ENCODE measurements at regions of chr22 and their contacts with region 1.

Region 1: DNA sequence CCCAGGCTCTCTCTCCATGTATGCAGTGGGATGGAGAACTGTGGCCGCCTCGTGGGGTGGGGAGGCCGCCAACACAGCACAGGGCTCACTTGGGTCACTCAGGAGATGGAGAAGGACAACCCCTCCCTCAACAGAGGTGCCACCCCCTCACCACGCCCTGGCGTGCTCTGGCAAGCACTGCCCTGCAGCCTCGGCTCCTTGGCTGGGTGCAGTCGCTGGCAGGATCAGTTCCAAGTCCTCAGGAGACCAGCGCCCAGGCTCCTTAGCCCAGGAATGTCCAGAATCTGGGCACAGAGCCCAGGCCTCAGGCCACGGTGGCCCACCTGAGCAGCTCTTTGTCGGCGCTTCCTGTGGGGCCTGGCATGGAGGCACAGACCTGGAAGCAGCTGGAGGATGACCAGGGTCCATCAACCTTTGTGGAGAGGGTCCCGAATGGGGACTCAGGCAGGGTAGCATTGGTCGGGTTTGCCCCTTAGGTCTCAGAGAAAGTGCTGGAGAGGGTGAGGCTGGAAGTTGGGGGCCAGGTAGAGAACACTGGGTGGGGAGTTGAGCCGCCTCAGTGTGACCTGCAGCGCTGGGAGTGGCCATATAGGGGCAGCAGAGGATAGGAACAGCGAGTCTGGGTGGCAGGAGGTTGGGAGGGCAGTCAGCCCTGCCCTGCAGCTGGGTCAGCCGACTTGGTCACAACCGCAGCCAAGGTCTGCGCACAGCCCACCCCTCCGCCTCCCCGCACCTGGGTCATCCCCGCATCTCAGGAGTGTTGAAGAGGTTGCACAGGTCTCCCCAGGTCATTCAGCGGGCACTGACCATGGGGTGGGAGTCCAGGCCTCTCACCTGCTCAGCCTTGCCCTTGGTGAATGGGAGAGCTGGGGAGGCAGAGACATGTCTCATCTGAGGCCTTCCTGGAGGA is 8.2 kb downstream of the SUSD2 start:
- DNase-seq: peak; percentile 61
- H3K4me3 ChIP-seq: no peak overlapping the region
- H3K27ac ChIP-seq: no peak overlapping the region
- H3K4me1 ChIP-seq: peaks cover 9% of the 10 kb centered on the region
- H3K27me3 ChIP-seq: no peaks in the 10 kb centered on the region
- CTCF ChIP-seq: peak; percentile 90 to 94
- POLR2A ChIP-seq: no peak

Region 2: GRCh38 chr22:24106385-24107381 is 82.8 kb before region 1 on chr22:
- CTCF ChIA-PET with region 1: no interaction called
- POLR2A ChIA-PET with region 1: no interaction called
- dilution Hi-C with region 1: no loop called
- intact Hi-C with region 1: no loop called
- DNase-seq: peak; percentile 5
- H3K4me3 ChIP-seq: no peak overlapping the region
- H3K27ac ChIP-seq: no peak overlapping the region
- H3K4me1 ChIP-seq: no peaks in the 10 kb centered on the region
- H3K27me3 ChIP-seq: no peaks in the 10 kb centered on the region
- CTCF ChIP-seq: no peak
- POLR2A ChIP-seq: no peak

Region 3: GRCh38 chr22:24200616-24201212 is 11.2 kb after region 1 on chr22:
- CTCF ChIA-PET with region 1: interaction called, 33 read pairs
- POLR2A ChIA-PET with region 1: no interaction called
- dilution Hi-C with region 1: no loop called
- intact Hi-C with region 1: no loop called
- DNase-seq: peak; percentile 74
- H3K4me3 ChIP-seq: no peak overlapping the region
- H3K27ac ChIP-seq: peak overlapping the region; percentile 22
- H3K4me1 ChIP-seq: peaks cover 24% of the 10 kb centered on the region
- H3K27me3 ChIP-seq: no peaks in the 10 kb centered on the region
- CTCF ChIP-seq: no peak
- POLR2A ChIP-seq: no peak

Region 4: DNA sequence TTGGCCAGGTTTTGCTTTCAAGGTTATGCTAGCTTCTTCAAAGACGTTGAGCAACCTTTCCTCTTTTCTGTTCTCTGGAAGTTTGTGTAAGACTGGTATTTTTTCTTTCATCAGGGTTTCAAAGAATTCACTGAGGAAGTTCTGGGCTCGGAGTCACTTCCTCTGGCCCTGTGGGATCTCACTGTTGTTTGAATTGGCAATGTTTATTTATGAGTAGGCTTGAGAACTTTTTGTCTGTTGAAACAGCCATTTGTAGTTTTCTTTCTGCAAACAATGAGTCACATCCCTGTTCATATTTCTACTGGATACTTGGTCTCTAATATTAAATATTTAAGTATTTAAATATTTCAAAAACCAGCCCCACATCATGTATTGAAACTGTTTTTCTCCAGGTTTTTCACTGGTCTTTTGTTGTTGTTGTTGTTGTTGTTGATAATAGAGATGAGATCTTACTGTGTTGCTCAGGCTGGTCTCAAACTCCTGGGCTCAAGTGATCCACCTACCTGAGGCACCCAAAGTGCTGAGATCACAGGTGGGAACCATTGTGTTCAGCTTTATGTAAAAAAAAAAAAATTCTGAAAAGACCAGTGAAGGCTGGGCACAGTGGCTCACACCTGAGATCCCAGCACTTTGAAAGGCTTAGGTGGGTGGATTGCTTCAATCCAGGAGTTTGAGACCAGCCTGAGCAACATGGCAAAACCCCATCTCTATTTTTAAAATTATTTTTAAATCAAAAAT is 18.7 kb after region 1 on chr22:
- CTCF ChIA-PET with region 1: interaction called, 33 read pairs
- POLR2A ChIA-PET with region 1: no interaction called
- dilution Hi-C with region 1: no loop called
- intact Hi-C with region 1: loop called (anchors 1 kb)
- DNase-seq: peak; percentile 98
- H3K4me3 ChIP-seq: peak overlapping the region in 1 of 3 experiments; percentile 46
- H3K27ac ChIP-seq: peak overlapping the region; percentile 99
- H3K4me1 ChIP-seq: peaks cover 43% of the 10 kb centered on the region
- H3K27me3 ChIP-seq: no peaks in the 10 kb centered on the region
- CTCF ChIP-seq: no peak
- POLR2A ChIP-seq: peak; percentile 61

Region 5: DNA sequence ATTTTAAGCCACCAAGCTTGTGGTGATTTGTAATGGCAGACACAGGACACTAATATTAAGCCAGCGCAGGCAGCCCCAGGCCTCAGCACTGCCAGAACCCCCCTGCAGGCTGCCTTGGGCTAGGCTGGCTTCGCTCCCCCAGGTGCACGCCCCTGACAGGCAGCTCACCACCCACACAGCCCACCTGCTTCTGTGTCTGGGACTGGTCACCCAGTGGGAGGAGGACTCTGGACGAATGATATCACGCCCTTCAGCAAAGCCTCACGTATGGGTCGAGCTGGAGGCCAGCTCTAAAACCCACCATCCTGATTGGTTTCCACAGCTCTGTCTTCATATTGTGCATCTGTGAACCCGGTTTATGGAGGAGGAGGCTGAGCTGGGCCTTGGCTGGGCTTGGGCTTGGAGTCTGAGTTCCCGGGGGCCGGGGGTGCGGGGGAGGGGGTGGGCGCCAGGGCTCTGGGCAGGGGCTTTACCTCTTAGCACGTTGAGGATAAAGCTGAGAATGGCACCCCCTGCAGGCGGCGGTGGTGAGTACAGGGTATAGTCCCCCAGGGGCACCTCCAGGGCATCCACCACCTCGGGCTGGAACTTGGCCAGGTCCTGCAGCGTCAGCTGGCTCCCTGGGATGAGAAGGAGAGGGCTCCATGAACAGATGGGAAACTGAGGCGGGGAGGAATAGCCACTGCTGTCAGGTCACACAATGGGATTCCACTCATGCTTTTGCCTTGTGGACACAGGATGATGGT is 41.6 kb after region 1 on chr22:
- CTCF ChIA-PET with region 1: interaction called, 71 read pairs
- POLR2A ChIA-PET with region 1: no interaction called
- dilution Hi-C with region 1: no loop called
- intact Hi-C with region 1: no loop called
- DNase-seq: peak; percentile 18
- H3K4me3 ChIP-seq: no peak overlapping the region
- H3K27ac ChIP-seq: no peak overlapping the region
- H3K4me1 ChIP-seq: no peaks in the 10 kb centered on the region
- H3K27me3 ChIP-seq: no peaks in the 10 kb centered on the region
- CTCF ChIP-seq: peak; percentile 21 to 38
- POLR2A ChIP-seq: no peak

Region 6: DNA sequence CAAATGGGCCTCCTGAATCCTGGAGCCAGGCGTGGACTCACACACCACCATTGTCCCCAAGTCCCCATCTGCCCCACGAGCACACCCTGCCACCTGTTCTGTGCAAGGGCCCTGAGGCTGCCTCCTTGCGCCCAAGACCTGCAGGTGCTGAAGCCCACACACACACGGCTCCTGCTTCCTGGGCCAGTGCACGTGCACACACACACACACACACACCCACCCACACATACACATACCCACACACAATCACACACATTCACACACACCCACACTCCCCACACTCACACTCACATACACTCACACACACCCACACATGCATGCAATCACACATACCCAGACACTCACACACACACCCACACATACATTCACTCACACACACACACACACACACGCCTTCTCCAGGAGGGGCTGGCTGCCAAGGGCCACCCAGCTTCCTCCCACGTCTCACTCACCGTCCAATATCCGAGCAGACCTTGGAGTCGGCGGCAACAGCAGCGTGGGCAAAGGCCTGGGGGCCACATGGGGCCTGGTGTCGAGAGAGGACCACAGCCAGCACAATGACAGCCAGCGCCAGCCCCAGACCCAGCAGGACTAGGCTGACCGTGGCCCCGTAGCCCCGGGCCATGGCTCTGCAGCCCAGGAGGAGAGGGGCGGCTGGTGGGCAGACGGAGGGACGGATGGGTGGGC is 54.7 kb after region 1 on chr22:
- CTCF ChIA-PET with region 1: interaction called, 164 read pairs
- POLR2A ChIA-PET with region 1: interaction called, 4 read pairs
- dilution Hi-C with region 1: no loop called
- intact Hi-C with region 1: loop called (anchors 1 kb)
- DNase-seq: peak; percentile 56
- H3K4me3 ChIP-seq: peak overlapping the region in 2 of 3 experiments; percentile 32 to 53
- H3K27ac ChIP-seq: peak overlapping the region; percentile 53
- H3K4me1 ChIP-seq: peaks cover 56% of the 10 kb centered on the region
- H3K27me3 ChIP-seq: no peaks in the 10 kb centered on the region
- CTCF ChIP-seq: no peak
- POLR2A ChIP-seq: no peak

Region 7: DNA sequence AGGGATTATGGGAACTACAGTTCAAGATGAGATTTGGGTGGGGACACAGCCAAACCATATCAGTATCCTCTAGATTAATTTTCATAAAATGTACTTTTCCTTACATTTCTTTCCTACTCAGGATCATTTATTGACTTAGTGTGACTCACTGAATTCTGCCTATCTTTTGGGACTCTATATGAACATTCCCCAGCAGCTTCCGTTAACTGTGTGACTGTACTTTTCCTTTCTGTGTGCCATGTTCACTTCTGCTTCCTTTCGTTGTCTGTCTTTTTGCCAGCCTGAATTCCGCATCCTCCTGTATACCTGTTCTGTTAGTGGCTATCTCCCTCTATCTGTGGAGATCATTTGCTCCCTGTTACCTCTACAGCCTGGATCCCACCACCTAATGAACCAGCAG is 129.9 kb after region 1 on chr22:
- CTCF ChIA-PET with region 1: no interaction called
- POLR2A ChIA-PET with region 1: no interaction called
- dilution Hi-C with region 1: no loop called
- intact Hi-C with region 1: loop called (anchors 1 kb)
- DNase-seq: peak; percentile 89
- H3K4me3 ChIP-seq: peak overlapping the region in 1 of 3 experiments; percentile 39
- H3K27ac ChIP-seq: peak overlapping the region; percentile 88
- H3K4me1 ChIP-seq: peaks cover 44% of the 10 kb centered on the region
- H3K27me3 ChIP-seq: no peaks in the 10 kb centered on the region
- CTCF ChIP-seq: no peak
- POLR2A ChIP-seq: peak; percentile 26

Region 8: DNA sequence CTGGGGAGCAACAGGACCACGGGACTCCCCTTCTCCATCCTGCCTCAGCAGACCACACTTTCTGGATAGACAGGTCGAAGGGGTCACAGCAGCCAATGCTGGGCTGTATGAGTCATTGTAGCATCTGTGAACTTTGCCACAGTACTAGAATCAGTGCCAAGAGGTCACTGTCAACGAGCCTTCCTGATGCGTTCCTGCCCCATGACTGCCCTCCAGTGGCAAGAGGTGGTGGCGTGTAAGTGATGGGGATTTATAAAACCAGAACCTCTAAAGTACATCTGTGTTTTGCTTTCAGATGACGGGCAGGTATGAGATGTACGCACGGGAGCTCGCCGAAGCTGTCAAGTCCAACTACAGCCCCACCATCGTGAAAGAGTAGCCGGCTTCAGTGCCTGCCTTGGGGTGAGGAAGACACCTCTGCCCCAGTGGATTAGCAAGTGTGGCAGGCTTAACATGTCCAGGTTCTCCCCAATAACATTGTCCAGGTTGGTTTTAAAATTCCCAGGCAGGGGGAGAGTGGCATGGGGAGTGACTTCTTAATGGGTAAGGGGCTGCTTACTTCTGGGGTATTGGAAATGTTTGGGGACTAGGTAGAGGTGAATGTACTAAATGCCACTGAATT is 336.0 kb after region 1 on chr22:
- CTCF ChIA-PET with region 1: no interaction called
- POLR2A ChIA-PET with region 1: no interaction called
- dilution Hi-C with region 1: no loop called
- intact Hi-C with region 1: loop called (anchors 10 kb)
- DNase-seq: peak; percentile 72
- H3K4me3 ChIP-seq: no peak overlapping the region
- H3K27ac ChIP-seq: no peak overlapping the region
- H3K4me1 ChIP-seq: peaks cover 9% of the 10 kb centered on the region
- H3K27me3 ChIP-seq: no peaks in the 10 kb centered on the region
- CTCF ChIP-seq: peak; percentile 84 to 89
- POLR2A ChIP-seq: no peak

Measured in endothelial cell of umbilical vein (primary cell).